Breast epithelium (tissue), 4 donors: ENCODE measurements at regions of chr2 and their contacts with region 1.

Region 1: DNA sequence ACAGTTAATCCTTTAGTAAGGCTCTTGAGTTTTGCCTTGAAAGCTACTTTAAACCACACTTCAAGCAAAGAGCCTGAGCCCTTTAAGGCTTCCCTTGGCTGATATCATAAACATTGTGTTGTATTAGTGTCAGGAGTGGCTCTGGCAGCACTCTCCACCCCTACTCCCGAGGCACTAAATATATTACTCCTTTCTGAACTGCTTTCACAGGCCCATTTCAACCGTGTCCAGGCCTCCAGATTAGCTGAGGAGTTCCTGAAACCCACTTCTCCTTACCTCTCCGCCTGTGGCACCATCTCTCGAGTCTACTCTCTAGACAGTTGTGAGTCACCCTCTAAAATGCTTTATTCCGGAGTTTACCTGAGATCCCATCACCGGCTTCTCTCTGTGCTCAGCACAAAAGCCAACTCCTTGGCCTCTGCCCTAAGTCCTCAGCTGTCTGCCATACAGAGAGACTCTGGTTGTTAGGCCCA is 14.4 kb upstream of the STON1 start:
- DNase-seq: no peak
- H3K4me3 ChIP-seq: no peak overlapping the region
- H3K27ac ChIP-seq: peak overlapping the region; percentile 18 to 59
- H3K4me1 ChIP-seq: no peaks in the 10 kb centered on the region
- H3K27me3 ChIP-seq: no peaks in the 10 kb centered on the region
- CTCF ChIP-seq: no peak
- POLR2A ChIP-seq: no peak

Region 2: DNA sequence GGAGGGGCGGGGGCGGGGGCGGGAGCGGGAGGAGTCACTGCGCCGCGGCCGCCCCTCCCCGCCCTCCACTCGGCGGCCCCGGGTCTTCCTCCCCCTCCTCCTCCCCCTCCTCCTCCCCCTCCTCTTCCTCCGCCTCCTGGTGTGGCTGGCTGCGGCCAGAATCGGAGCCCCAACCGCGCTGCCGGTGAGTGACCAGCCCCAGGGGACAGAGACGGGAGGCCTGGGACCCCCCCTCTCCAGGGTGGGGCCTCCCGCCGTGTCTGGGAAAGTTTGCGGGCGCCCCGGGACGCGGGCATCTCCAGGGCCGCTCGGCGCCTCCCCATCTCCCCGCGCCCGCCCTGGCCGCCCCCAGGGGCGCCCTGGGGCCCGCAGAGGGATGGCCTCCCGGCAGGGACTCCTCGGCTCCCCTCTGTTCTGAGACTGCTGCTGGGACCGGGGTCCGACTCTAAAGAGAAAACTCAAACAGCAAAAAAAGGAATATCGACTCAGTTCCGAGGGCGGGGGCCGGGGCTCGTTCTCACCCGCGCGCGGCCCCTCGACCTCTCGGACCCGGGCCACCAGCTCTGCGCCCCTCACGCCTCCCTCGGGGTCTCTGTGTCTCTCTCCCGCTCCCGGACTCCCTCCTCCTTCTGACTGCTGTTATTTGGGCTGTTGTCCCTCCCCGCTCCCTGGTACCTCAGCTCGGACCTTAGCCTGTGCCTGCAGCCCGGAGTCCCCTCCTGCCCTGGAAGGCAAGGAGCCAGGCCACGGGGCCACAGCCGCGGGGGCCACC is 14.7 kb after region 1 on chr2 and contains the start of gene STON1:
- intact Hi-C with region 1: no loop called
- DNase-seq: no peak
- H3K4me3 ChIP-seq: peak within 1 kb of the TSS; percentile 82 to 86 (median 86)
- H3K27ac ChIP-seq: peak within 1 kb of the TSS; percentile 74 to 91
- H3K4me1 ChIP-seq: no peaks in the 10 kb centered on the region
- H3K27me3 ChIP-seq: no peaks in the 10 kb centered on the region
- CTCF ChIP-seq: no peak
- POLR2A ChIP-seq: no peak
- total RNA-seq, gene STON1: 21.7 to 45.6 (median 35.1) TPM

Region 3: DNA sequence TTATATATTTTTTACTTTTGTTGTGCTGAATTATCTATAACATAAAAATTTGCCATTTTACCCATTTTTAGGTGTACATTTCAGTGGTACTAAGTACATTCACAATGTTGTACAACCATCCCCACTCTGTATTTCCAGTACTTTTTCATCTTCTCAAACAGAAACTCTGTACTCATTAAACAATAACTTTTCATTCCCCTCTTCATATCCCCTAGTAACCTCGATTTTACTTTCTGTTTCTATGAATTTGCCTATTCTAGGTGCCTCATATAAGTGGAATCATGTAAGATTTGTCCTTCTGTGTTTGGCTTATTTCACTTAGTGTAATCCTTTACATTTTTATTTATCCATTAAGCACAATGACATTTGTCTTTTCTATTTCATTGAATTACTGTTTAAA is 153.4 kb after region 1 on chr2:
- intact Hi-C with region 1: no loop called
- DNase-seq: no peak
- H3K4me3 ChIP-seq: no peak overlapping the region
- H3K27ac ChIP-seq: no peak overlapping the region
- H3K4me1 ChIP-seq: no peaks in the 10 kb centered on the region
- H3K27me3 ChIP-seq: no peaks in the 10 kb centered on the region
- CTCF ChIP-seq: no peak
- POLR2A ChIP-seq: no peak

Region 4: DNA sequence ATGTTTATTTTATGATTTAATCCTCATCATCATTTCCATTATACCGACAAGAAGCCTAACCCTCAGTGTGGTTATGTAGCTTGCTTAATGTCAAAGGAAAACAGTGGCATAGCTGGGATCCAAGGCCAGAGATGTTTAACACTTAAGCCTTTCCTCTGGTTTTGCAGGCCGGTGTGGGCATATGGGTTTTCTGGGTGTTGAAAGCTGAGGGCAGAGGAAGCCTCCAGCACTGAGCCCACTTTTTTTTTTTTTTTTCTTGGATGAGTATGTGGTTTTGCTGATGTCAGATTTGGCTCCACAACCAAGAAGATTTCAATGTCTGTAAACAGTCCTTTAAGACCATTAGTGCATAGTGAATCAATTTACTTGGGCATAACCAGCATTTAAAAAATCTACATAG is 198.7 kb after region 1 on chr2:
- intact Hi-C with region 1: loop called (anchors 5 kb)
- DNase-seq: no peak
- H3K4me3 ChIP-seq: no peak overlapping the region
- H3K27ac ChIP-seq: no peak overlapping the region
- H3K4me1 ChIP-seq: no peaks in the 10 kb centered on the region
- H3K27me3 ChIP-seq: no peaks in the 10 kb centered on the region
- CTCF ChIP-seq: no peak
- POLR2A ChIP-seq: no peak